ENCODE measurements at regions of chr7 and their contacts with region 1.

Region 1: DNA sequence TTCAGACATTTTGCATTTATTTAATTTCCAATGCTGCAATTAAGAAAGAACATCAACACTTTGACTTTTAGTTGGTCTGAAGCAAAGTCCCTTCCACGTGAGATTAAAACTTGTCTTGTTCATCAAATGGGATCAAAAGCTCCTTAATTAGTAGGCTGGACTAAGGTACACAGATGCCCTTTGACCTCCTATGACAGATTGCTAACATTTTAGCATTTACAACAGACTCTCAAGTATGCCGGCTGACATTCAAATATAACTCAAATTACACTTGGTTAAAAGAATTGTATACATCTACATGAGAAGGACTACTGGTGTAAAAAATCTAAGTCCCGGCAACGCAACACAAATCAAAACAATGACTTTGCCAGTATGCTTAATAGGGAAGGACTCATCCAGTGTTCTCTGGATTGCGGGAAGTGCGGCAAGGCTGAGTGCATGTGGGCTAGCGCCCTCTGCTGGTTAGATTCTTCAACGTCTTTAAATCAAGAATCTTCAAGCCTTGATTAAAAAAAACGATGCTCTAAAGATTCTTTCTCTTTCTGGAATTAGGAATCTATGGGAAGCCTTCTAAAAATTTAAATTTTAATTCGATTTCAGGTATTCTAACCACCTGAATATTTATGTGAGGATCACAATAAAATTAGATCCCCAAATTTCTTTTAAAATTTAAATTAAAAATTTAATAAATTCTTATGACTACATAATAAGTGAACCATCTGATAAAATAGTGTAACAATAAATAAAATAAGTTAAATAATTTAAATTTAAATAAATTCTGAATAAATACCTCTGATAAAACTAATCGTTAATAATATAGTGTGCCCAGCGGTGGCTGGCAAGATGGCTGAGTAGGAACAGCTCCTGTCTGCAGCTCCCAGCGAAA is 444.7 kb downstream of the DGKB start:
- DNase-seq: no peak
- ATAC-seq: no peak
- H3K4me3 Mint-ChIP-seq: no peak overlapping the region
- H3K27ac Mint-ChIP-seq: no peak overlapping the region
- H3K4me1 Mint-ChIP-seq: no peaks in the 10 kb centered on the region
- H3K27me3 Mint-ChIP-seq: no peaks in the 10 kb centered on the region
- CTCF ChIP-seq: no peak

Region 2: DNA sequence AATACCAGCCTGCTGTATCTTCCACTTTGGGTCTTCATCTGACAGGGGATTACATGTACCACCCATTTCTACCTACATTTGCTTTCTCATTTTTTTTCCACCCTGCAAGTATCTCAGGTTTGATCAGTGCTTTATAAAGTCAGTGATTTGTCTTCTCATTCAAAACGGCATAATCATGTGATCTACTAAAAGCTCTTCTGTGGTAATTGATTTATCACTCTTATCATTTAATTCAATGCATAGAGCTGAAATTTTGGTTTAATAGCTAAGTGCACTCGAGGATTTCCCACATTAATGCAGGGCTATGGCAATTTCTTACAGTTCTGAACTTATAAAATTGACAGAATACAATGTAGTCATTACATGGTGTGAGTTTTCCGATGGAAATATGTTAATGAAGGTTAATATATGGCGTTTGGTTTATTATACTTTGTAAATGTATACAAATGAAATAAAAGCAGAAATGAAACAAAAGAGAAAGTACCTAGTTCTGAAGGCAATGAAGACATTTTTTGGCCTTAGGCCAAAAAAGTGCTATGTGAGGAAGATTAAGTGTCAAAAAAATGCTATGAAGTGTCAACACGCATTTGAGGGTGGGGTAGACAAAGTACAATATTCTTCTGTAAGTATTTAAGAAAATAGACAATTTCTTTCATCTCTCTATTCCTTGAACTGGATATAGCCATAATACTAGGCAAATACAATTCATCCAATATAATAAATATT is 925.6 kb before region 1 on chr7:
- CTCF ChIA-PET with region 1: no interaction called
- POLR2A ChIA-PET with region 1: no interaction called
- intact Hi-C with region 1: loop called (anchors 5 kb)
- DNase-seq: no peak
- ATAC-seq: no peak
- H3K4me3 Mint-ChIP-seq: no peak overlapping the region
- H3K27ac Mint-ChIP-seq: no peak overlapping the region
- H3K4me1 Mint-ChIP-seq: no peaks in the 10 kb centered on the region
- H3K27me3 Mint-ChIP-seq: no peaks in the 10 kb centered on the region
- CTCF ChIP-seq: no peak

Measured in activated B cell treated with CpG ODN at 0.5 μM for 24 hours (primary cell).